Brain microvascular endothelial cell (primary cell): ENCODE measurements at regions of chr3 and their contacts with region 1.

Region 1: DNA sequence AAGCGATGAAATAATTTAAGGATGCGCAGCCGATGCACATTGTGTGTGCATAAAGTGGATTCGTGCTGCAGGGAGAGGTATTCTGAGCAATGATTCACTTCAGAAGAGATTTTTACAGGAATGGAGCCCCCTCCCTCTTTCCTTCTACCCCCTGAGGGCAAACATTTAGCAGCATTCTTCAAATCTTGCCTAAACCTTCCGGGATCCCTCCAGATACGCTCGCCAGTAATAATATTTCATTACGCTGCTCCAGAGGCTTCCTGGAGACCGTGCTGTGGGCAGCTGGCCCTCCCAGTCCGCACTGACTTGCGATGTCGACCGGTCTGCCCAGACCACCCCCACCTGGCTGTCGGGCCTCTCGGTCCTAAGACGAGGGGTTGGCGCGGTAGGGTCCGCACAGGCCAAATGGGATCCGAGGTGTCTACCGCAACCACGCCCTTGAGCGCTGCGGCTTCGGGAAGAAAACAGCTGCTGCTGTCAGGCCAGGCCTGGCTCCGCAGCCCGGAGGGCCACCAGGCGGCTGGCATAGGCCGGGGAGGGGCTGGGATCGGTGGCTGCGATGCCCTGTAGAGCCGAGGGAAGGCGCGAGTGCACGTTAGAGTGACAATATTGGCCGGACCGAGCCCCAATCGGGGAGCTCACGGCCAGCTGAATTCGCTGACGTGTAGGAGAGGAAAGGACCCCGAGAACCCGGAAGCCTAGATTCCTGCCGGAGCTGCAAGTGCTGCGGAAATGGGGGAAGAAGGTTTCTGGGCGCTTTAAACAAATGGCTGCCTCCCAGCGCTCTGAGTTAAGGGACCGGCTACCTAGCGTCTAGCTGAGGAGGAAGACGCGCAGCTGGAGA is 14.3 kb downstream of the ZIC4 start:
- DNase-seq: peak; percentile 73
- H3K4me3 ChIP-seq: peak overlapping the region; percentile 65
- H3K27ac ChIP-seq: peak overlapping the region; percentile 58
- H3K27me3 ChIP-seq: no peaks in the 10 kb centered on the region
- CTCF ChIP-seq: peak; percentile 58

Region 2: DNA sequence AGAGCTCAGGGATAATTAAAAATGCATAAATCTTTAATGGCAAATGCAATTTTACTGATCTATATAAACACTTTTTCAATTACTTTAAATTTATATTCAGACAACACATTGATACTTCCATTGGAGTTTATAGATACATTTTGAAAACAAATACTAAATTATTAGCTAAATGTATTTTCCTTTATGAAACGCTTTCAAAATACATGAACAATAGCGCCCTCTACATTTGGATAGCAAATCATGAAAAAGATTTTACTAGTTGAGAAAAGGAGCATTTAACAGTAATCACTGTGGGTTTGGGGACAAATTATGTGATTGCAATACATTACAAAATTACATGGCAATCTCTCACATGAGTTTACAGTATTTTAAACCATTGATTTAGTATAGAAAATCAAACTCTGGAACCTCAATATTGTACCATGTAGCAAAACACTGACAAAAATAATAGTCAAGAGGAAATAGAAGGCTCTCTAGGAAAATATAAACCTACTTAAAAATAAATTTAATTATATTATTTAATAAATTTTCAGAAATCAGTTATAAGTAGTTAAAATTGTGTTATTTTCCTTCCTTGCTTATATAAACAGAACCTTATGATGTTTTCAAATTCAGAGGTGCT is 225.1 kb after region 1 on chr3:
- in situ Hi-C with region 1: loop called (anchors 25 kb)
- DNase-seq: no peak
- H3K4me3 ChIP-seq: no peak overlapping the region
- H3K27ac ChIP-seq: no peak overlapping the region
- H3K27me3 ChIP-seq: no peaks in the 10 kb centered on the region
- CTCF ChIP-seq: peak; percentile 16